OCI-LY7 (cell line): ENCODE measurements at regions of chr4 and their contacts with region 1.

Region 1: GRCh38 chr4:181308476-181309170 is 934.6 kb upstream of the TENM3 start:
- DNase-seq: no peak
- H3K4me3 ChIP-seq: no peak overlapping the region
- H3K27ac ChIP-seq: no peak overlapping the region
- H3K4me1 ChIP-seq: no peaks in the 10 kb centered on the region
- CTCF ChIP-seq: no peak

Region 2: DNA sequence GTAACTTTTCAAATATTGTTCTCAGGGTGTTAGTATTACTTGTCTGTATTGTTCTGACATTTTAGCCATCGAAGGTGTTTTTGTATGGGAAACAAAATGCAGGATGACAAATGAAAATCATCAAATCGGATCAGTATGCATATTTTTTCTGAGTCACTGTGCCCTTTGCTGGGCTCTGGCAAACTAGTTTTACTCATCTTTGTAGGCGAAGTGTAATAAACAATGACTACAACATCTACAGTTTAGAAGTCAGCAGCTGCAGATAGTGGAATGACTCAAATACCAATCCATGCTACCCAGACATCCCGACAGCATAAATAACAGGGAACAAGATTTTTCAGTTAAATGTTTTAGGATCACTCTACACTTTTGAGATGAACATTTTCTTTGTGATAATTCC is 377.3 kb after region 1 on chr4:
- CTCF ChIA-PET with region 1: no interaction called
- POLR2A ChIA-PET with region 1: interaction called, 12 read pairs
- intact Hi-C with region 1: no loop called
- DNase-seq: no peak
- H3K4me3 ChIP-seq: no peak overlapping the region
- H3K27ac ChIP-seq: no peak overlapping the region
- H3K4me1 ChIP-seq: no peaks in the 10 kb centered on the region
- CTCF ChIP-seq: no peak